Endothelial cell of umbilical vein (primary cell): ENCODE measurements at regions of chr1 and their contacts with region 1.

Region 1: DNA sequence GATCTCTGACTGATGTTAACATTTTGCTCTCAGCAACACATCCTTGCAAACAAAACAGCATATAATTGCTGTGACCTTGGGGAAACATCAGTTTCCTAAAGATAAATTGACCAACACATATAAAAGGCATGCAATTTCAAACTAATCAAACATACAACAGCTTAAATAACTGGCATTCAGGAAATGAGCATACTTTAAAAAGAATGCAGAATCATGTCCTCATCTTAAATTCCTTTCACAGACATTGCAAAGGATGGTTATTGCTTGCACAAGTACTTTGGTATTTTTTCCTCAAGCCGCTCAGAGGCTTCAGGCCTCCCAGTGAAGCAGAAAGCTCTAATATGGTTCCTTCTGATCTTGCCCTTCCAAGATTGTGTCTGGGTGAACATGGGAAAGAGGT is 53.4 kb upstream of the RGS18 start:
- DNase-seq: peak; percentile 96
- H3K4me3 ChIP-seq: no peak overlapping the region
- H3K27ac ChIP-seq: peak overlapping the region; percentile 100
- H3K4me1 ChIP-seq: peaks cover 23% of the 10 kb centered on the region
- H3K27me3 ChIP-seq: no peaks in the 10 kb centered on the region
- CTCF ChIP-seq: no peak
- POLR2A ChIP-seq: peak; percentile 73

Region 2: GRCh38 chr1:191831572-191831971 is 273.3 kb before region 1 on chr1:
- CTCF ChIA-PET with region 1: no interaction called
- POLR2A ChIA-PET with region 1: no interaction called
- dilution Hi-C with region 1: no loop called
- intact Hi-C with region 1: loop called (anchors 10 kb)
- DNase-seq: peak; percentile 7
- H3K4me3 ChIP-seq: no peak overlapping the region
- H3K27ac ChIP-seq: no peak overlapping the region
- H3K4me1 ChIP-seq: no peaks in the 10 kb centered on the region
- H3K27me3 ChIP-seq: no peaks in the 10 kb centered on the region
- CTCF ChIP-seq: no peak
- POLR2A ChIP-seq: no peak

Region 3: GRCh38 chr1:191984856-191985255 is 120.0 kb before region 1 on chr1:
- CTCF ChIA-PET with region 1: no interaction called
- POLR2A ChIA-PET with region 1: no interaction called
- dilution Hi-C with region 1: no loop called
- intact Hi-C with region 1: no loop called
- DNase-seq: no peak
- H3K4me3 ChIP-seq: no peak overlapping the region
- H3K27ac ChIP-seq: no peak overlapping the region
- H3K4me1 ChIP-seq: no peaks in the 10 kb centered on the region
- H3K27me3 ChIP-seq: no peaks in the 10 kb centered on the region
- CTCF ChIP-seq: no peak
- POLR2A ChIP-seq: no peak

Region 4: DNA sequence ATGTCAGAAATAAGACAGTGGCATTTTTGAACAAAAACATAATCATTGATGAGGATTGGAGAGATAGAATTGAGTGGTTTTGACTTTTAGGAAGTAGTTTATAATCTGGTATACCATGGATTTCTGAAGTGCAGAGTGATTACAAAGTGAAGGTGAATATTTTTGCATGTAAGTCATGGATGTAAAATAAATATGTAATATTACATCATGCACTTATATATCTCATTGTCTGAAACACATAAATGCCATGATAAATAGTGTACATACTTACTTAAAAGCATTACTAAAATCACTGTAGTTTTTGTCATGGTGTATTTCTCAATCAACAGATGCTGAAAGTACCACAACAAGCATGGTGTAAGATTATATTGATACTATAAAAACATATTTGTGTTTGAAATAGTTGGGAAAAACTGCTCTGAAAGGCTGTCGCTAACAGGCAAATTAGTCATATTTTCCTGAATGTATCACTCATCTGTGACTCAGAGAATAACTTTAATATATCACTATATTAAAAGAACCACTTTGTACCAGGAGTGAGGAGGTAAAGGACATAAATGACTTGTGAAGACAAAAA is 28.6 kb after region 1 on chr1:
- CTCF ChIA-PET with region 1: no interaction called
- POLR2A ChIA-PET with region 1: no interaction called
- dilution Hi-C with region 1: no loop called
- intact Hi-C with region 1: loop called (anchors 1 kb)
- DNase-seq: peak; percentile 77
- H3K4me3 ChIP-seq: no peak overlapping the region
- H3K27ac ChIP-seq: peak overlapping the region; percentile 74
- H3K4me1 ChIP-seq: peaks cover 8% of the 10 kb centered on the region
- H3K27me3 ChIP-seq: no peaks in the 10 kb centered on the region
- CTCF ChIP-seq: no peak
- POLR2A ChIP-seq: no peak

Region 5: GRCh38 chr1:192263436-192263835 is 158.6 kb after region 1 on chr1:
- CTCF ChIA-PET with region 1: no interaction called
- POLR2A ChIA-PET with region 1: no interaction called
- dilution Hi-C with region 1: no loop called
- intact Hi-C with region 1: loop called (anchors 1 kb)
- DNase-seq: peak; percentile 88
- H3K4me3 ChIP-seq: no peak overlapping the region
- H3K27ac ChIP-seq: peak overlapping the region; percentile 83
- H3K4me1 ChIP-seq: peaks cover 28% of the 10 kb centered on the region
- H3K27me3 ChIP-seq: no peaks in the 10 kb centered on the region
- CTCF ChIP-seq: no peak
- POLR2A ChIP-seq: no peak

Region 6: GRCh38 chr1:192445848-192446489 is 341.1 kb after region 1 on chr1:
- CTCF ChIA-PET with region 1: interaction called, 3 read pairs
- POLR2A ChIA-PET with region 1: no interaction called
- dilution Hi-C with region 1: no loop called
- intact Hi-C with region 1: loop called (anchors 2 kb)
- DNase-seq: peak; percentile 71
- H3K4me3 ChIP-seq: no peak overlapping the region
- H3K27ac ChIP-seq: peak overlapping the region; percentile 57
- H3K4me1 ChIP-seq: peaks cover 33% of the 10 kb centered on the region
- H3K27me3 ChIP-seq: no peaks in the 10 kb centered on the region
- CTCF ChIP-seq: peak; percentile 44 to 49
- POLR2A ChIP-seq: no peak